CD4-positive, alpha-beta memory T cell (primary cell): ENCODE measurements at regions of chr2 and their contacts with region 1.

Region 1: DNA sequence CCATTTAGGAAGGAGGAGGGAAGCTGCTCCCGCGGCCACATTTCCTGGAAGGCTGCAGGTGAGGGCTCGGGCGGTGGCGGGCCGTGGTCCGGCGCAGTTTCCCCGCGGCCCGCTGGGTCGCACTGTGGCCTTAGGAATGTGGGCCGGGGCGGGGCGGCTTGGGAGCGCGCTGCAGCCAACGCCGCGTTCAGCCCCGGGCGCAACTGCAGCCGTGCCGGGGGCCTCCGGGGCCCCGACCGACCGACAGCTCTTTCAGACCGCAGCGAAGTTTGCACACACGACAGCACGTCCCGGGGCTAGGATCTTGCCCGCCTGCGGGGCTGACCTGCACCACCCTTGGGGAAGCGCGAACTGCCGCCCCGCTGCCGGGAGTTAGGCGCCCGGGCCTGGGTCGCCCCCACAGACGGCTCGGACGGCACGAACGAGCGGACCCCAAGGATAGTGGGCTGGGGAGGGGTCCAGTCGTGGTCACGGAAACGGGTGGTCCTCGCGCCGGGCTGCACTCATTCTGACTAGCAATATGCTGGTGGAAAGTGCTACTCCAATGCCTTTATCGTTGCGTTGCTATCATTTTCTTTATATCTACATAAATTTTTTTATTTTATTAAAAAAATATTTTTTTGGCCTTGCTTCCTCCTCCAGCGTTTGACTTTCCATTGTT is 69.9 kb upstream of the DLX2 start:
- DNase-seq: peak in 4 of 5 donors; percentile 57 to 63 (median 60)
- H3K4me3 ChIP-seq: peak overlapping the region in 1 of 2 donors; percentile 40
- H3K4me3 Mint-ChIP-seq: peak overlapping the region; percentile 54 to 83 (median 72)
- H3K27ac ChIP-seq: no peak overlapping the region
- H3K27ac Mint-ChIP-seq: no peak overlapping the region
- H3K4me1 ChIP-seq: peaks cover 3% of the 10 kb centered on the region
- H3K4me1 Mint-ChIP-seq: peaks cover 3 to 6% (median 4%) of the 10 kb centered on the region in 4 donors
- H3K27me3 ChIP-seq: no peaks in the 10 kb centered on the region
- H3K27me3 Mint-ChIP-seq: peaks cover 0 to 4% of the 10 kb centered on the region in 2 donors

Region 2: DNA sequence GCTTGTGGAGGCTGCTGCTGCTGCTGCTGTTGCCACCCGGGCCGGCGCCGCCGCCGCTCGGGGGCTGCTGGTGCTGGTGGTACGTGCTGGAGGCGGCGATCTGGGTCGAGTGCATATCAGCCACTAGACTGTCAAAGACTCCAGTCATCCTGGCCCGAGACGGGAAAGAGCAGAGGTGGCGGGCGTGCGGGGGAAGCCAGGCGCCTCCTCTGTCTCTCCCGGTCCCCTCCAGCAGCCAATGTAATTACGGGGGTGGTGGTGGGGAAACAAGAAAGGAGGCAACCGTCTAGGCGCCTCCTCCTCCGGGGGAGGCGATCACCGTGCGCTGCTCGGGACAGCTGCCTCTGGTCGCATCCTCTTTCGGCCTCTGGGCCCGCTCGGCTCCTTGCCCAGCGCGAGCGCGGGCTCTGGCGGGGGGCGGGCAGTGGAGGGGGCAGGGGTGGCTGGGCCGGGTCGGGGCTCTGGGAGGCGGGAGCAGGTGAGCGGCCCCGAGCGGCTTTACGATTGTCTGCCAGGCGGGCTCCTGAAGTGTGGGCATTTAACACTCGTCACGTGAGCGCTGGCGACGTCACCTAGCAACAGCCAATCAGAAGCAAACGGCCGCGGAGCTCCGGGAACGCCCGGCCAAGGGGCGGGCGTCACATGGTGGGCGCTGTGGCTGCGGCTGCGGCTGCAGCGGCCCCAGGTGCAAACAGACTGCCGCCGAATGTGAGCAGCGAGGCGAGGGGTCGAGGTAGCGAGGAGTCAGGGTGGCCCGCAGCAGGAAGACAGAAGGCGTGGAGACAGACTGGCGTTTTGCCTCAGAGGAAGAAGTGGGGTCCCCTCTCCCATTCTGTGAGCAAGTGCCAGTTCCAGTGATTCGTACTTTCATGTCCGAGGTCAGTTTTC is 70.0 kb before region 1 on chr2 and contains the start of gene DLX2:
- CTCF ChIA-PET with region 1: no interaction called
- POLR2A ChIA-PET with region 1: no interaction called
- intact Hi-C with region 1: no loop called
- DNase-seq: peak in 3 of 5 donors; percentile 52 to 60 (median 52)
- H3K4me3 ChIP-seq: peak within 1 kb of the TSS; percentile 23 to 60
- H3K4me3 Mint-ChIP-seq: peak within 1 kb of the TSS; percentile 79 to 91 (median 86)
- H3K27ac ChIP-seq: no peak within 1 kb of the TSS
- H3K27ac Mint-ChIP-seq: peak within 1 kb of the TSS in 6 of 7 donors; percentile 54 to 93 (median 86)
- H3K4me1 ChIP-seq: peaks cover 80% of the 10 kb centered on the region
- H3K4me1 Mint-ChIP-seq: peaks cover 25 to 65% (median 51%) of the 10 kb centered on the region in 4 donors
- H3K27me3 ChIP-seq: peaks cover 92% of the 10 kb centered on the region
- H3K27me3 Mint-ChIP-seq: peaks cover 57 to 59% of the 10 kb centered on the region in 2 donors
- total RNA-seq, gene DLX2: not detected

Region 3: GRCh38 chr2:172193331-172194089 is 20.9 kb after region 1 on chr2:
- CTCF ChIA-PET with region 1: no interaction called
- POLR2A ChIA-PET with region 1: no interaction called
- intact Hi-C with region 1: no loop called
- DNase-seq: no peak
- H3K4me3 ChIP-seq: no peak overlapping the region
- H3K4me3 Mint-ChIP-seq: peak overlapping the region in 1 of 8 donors; percentile 13
- H3K27ac ChIP-seq: no peak overlapping the region
- H3K27ac Mint-ChIP-seq: peak overlapping the region in 1 of 7 donors; percentile 37
- H3K4me1 ChIP-seq: peaks cover 5% of the 10 kb centered on the region
- H3K4me1 Mint-ChIP-seq: peaks cover 5 to 12% (median 7%) of the 10 kb centered on the region in 4 donors
- H3K27me3 ChIP-seq: no peaks in the 10 kb centered on the region
- H3K27me3 Mint-ChIP-seq: peaks cover 1 to 6% of the 10 kb centered on the region in 2 donors

Region 4: DNA sequence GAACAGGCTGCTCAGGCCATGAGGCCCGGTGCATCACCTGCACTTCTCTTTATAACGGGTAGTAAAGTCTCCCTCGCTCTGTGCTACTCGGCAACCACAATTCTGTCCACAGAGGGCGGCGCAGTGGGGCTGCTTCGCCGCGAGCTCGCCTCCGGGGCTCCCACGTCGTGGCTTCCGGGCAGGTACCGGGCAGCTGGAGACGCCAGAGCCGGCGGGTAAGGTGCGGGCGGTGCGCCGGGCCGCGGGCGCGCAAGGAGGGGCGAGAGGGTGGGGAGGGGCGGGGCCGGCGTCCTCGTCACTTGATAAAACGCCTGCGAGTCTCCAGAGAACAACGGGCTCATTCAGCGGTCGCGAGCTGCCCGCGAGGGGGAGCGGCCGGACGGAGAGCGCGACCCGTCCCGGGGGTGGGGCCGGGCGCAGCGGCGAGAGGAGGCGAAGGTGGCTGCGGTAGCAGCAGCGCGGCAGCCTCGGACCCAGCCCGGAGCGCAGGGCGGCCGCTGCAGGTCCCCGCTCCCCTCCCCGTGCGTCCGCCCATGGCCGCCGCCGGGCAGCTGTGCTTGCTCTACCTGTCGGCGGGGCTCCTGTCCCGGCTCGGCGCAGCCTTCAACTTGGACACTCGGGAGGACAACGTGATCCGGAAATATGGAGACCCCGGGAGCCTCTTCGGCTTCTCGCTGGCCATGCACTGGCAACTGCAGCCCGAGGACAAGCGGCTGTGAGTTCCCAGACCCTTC is 254.8 kb after region 1 on chr2 and contains the start of gene ITGA6:
- CTCF ChIA-PET with region 1: interaction called, 11 read pairs
- POLR2A ChIA-PET with region 1: no interaction called
- intact Hi-C with region 1: no loop called
- DNase-seq: peak; percentile 75 to 84 (median 78)
- H3K4me3 ChIP-seq: peak within 1 kb of the TSS; percentile 31 to 76
- H3K4me3 Mint-ChIP-seq: peak within 1 kb of the TSS; percentile 88 to 97 (median 94)
- H3K27ac ChIP-seq: peak within 1 kb of the TSS; percentile 66
- H3K27ac Mint-ChIP-seq: peak within 1 kb of the TSS; percentile 92 to 95 (median 93)
- H3K4me1 ChIP-seq: peaks cover 65% of the 10 kb centered on the region
- H3K4me1 Mint-ChIP-seq: peaks cover 30 to 52% (median 46%) of the 10 kb centered on the region in 4 donors
- H3K27me3 ChIP-seq: no peaks in the 10 kb centered on the region
- H3K27me3 Mint-ChIP-seq: no peaks in the 10 kb centered on the region
- total RNA-seq, gene ITGA6: 69.1 to 73.6 TPM

Region 5: DNA sequence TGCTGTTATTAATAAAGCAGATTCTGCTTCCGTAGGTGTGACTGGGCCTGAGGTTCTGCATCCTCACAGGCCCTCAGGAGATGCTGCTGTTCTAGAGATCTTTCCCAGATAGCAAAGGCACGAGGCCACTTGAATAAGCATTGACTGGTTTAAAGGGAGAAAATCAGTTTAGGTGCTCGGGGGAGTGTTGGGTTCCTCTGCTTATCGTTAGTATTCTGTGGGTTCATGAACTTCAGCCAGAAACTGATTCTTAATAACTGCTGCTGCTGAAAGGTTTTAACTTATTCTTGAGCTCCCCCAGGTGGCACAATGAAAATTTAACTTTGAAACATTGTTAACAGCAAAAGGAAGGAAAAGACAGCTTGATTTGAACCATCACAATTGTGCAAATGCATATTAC is 311.6 kb after region 1 on chr2:
- CTCF ChIA-PET with region 1: interaction called, 17 read pairs
- POLR2A ChIA-PET with region 1: interaction called, 3 read pairs
- intact Hi-C with region 1: loop called (anchors 1 kb)
- DNase-seq: peak in 4 of 5 donors; percentile 25 to 34 (median 32)
- H3K4me3 ChIP-seq: no peak overlapping the region
- H3K4me3 Mint-ChIP-seq: no peak overlapping the region
- H3K27ac ChIP-seq: no peak overlapping the region
- H3K27ac Mint-ChIP-seq: peak overlapping the region in 5 of 7 donors; percentile 23 to 76 (median 66)
- H3K4me1 ChIP-seq: peaks cover 6% of the 10 kb centered on the region
- H3K4me1 Mint-ChIP-seq: peaks cover 26 to 51% (median 34%) of the 10 kb centered on the region in 4 donors
- H3K27me3 ChIP-seq: no peaks in the 10 kb centered on the region
- H3K27me3 Mint-ChIP-seq: no peaks in the 10 kb centered on the region

Region 6: DNA sequence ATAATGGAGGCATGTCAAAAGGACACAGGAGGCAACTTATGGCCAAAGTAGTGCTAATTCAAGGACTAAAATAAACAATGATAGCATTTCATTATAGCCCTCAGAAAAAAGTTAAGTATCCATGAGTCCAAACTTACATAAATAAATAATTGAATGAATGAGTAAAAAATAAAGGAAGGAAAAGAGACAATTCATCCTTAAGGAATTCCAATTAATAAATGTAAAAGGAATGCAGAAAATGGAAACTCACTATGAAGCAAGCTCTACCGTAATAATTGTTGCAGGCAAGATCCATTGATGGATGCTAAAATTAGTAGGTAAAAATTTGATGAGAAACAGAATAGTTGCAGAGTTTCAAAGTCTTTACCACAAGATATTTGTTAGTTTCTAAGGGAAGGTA is 474.8 kb after region 1 on chr2:
- CTCF ChIA-PET with region 1: no interaction called
- POLR2A ChIA-PET with region 1: no interaction called
- intact Hi-C with region 1: no loop called
- DNase-seq: no peak
- H3K4me3 ChIP-seq: no peak overlapping the region
- H3K4me3 Mint-ChIP-seq: no peak overlapping the region
- H3K27ac ChIP-seq: no peak overlapping the region
- H3K27ac Mint-ChIP-seq: no peak overlapping the region
- H3K4me1 ChIP-seq: no peaks in the 10 kb centered on the region
- H3K4me1 Mint-ChIP-seq: no peaks in the 10 kb centered on the region
- H3K27me3 ChIP-seq: no peaks in the 10 kb centered on the region
- H3K27me3 Mint-ChIP-seq: peaks cover 9 to 10% of the 10 kb centered on the region in 2 donors

Region 7: GRCh38 chr2:172674034-172674967 is 501.7 kb after region 1 on chr2:
- CTCF ChIA-PET with region 1: interaction called, 4 read pairs
- POLR2A ChIA-PET with region 1: no interaction called
- intact Hi-C with region 1: loop called (anchors 10 kb)
- DNase-seq: peak in 3 of 5 donors; percentile 6 to 15 (median 6)
- H3K4me3 ChIP-seq: no peak overlapping the region
- H3K4me3 Mint-ChIP-seq: peak overlapping the region in 4 of 8 donors; percentile 2 to 58 (median 38)
- H3K27ac ChIP-seq: no peak overlapping the region
- H3K27ac Mint-ChIP-seq: no peak overlapping the region
- H3K4me1 ChIP-seq: peaks cover 4% of the 10 kb centered on the region
- H3K4me1 Mint-ChIP-seq: peaks cover 0 to 3% (median under 1%) of the 10 kb centered on the region in 4 donors
- H3K27me3 ChIP-seq: no peaks in the 10 kb centered on the region
- H3K27me3 Mint-ChIP-seq: peaks cover 2 to 11% of the 10 kb centered on the region in 2 donors

Region 8: GRCh38 chr2:172710584-172711024 is 538.0 kb after region 1 on chr2:
- CTCF ChIA-PET with region 1: interaction called, 3 read pairs
- POLR2A ChIA-PET with region 1: no interaction called
- intact Hi-C with region 1: loop called (anchors 5 kb)
- DNase-seq: peak in 4 of 5 donors; percentile 11 to 31 (median 22)
- H3K4me3 ChIP-seq: no peak overlapping the region
- H3K4me3 Mint-ChIP-seq: no peak overlapping the region
- H3K27ac ChIP-seq: no peak overlapping the region
- H3K27ac Mint-ChIP-seq: no peak overlapping the region
- H3K4me1 ChIP-seq: no peaks in the 10 kb centered on the region
- H3K4me1 Mint-ChIP-seq: no peaks in the 10 kb centered on the region
- H3K27me3 ChIP-seq: no peaks in the 10 kb centered on the region
- H3K27me3 Mint-ChIP-seq: peaks cover 11 to 19% of the 10 kb centered on the region in 2 donors